Motor neuron (in vitro differentiated cells): ENCODE measurements at regions of chr6 and their contacts with region 1.

Region 1: DNA sequence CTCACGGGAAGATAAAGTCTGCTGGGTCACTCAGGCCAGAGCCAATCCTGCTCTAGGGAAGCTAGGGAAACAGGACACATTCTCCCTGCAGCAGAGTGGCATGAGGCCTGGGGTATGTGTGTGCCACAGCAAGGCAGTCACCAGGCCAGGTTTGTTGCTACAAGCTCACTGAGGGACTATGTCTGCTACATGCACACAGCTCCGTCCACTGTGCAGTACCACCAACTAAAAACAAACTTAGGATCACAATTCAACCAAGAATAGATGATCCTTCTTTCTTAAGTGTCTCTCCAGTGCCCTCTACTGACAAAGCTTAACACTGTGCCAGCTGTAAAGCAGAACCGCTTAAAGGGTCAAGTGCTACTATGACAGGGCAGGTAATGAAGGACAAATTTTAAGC is 192.5 kb downstream of the PTPRK start:
- ATAC-seq: peak in 4 of 8 experiments; percentile 11 to 91 (median 80)
- H3K4me3 ChIP-seq: no peak overlapping the region
- H3K27ac ChIP-seq: no peak overlapping the region
- H3K4me1 ChIP-seq: no peaks in the 10 kb centered on the region

Region 2: DNA sequence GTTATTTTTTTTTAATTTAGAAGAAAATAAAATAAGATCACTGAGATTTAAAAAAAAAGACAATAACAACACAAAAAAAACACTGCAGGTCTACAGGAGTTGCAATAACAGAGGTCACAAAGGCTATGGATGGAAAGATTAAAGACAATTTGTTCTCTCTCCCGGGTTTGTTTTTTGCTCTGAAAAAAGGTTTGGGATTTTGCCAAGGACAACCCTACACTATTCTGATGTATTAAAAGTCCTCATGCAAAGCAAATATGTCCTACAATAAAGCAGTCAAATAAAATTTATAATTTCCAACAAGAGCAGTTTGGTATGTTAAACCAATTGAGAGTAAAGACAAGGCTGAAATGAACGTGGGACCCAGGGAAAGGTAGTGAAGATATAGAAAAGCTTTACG is 136.9 kb after region 1 on chr6:
- in situ Hi-C with region 1: no loop called
- ATAC-seq: no peak
- H3K4me3 ChIP-seq: no peak overlapping the region
- H3K27ac ChIP-seq: no peak overlapping the region
- H3K4me1 ChIP-seq: no peaks in the 10 kb centered on the region

Region 3: GRCh38 chr6:128520436-128521281 is 192.8 kb after region 1 on chr6 and contains the start of gene PTPRK:
- in situ Hi-C with region 1: loop called in 1 of 9 experiments (anchors 25 kb)
- ATAC-seq: peak; percentile 81 to 92 (median 88)
- H3K4me3 ChIP-seq: peak within 1 kb of the TSS; percentile 60 to 78 (median 67)
- H3K27ac ChIP-seq: peak within 1 kb of the TSS; percentile 77 to 86
- H3K4me1 ChIP-seq: peaks cover 11 to 16% of the 10 kb centered on the region in 2 donors
- total RNA-seq, gene PTPRK: 14.4 to 93.9 (median 26.3) TPM